SK-N-SH (cell line): ENCODE measurements at regions of chr10 and their contacts with region 1.

Region 1: GRCh38 chr10:94439275-94439861 is 37.0 kb downstream of the TBC1D12 start:
- DNase-seq: no peak
- H3K4me3 ChIP-seq: no peak overlapping the region
- H3K27ac ChIP-seq: no peak overlapping the region
- H3K4me1 ChIP-seq: peaks cover 3 to 10% of the 10 kb centered on the region in 2 experiments; a peak in 2 of 4 replicates
- H3K27me3 ChIP-seq: no peaks in the 10 kb centered on the region
- CTCF ChIP-seq: peak; percentile 25; the same call in 1 of the 2 replicates
- EP300 ChIP-seq: no peak
- RAD21 ChIP-seq: peak; percentile 46

Region 2: GRCh38 chr10:93916257-93917063 is 522.9 kb before region 1 on chr10:
- CTCF ChIA-PET with region 1: interaction called, 50 read pairs
- POLR2A ChIA-PET with region 1: no interaction called
- DNase-seq: peak; percentile 34
- H3K4me3 ChIP-seq: no peak overlapping the region
- H3K27ac ChIP-seq: no peak overlapping the region
- H3K4me1 ChIP-seq: peaks cover 0 to 3% of the 10 kb centered on the region in 2 experiments; a peak in 1 of 4 replicates
- H3K27me3 ChIP-seq: no peaks in the 10 kb centered on the region
- CTCF ChIP-seq: peak; percentile 81
- EP300 ChIP-seq: no peak
- RAD21 ChIP-seq: peak; percentile 80

Region 3: GRCh38 chr10:94334857-94335256 is 104.5 kb before region 1 on chr10:
- CTCF ChIA-PET with region 1: interaction called, 16 read pairs
- POLR2A ChIA-PET with region 1: no interaction called
- DNase-seq: no peak
- H3K4me3 ChIP-seq: no peak overlapping the region
- H3K27ac ChIP-seq: no peak overlapping the region
- H3K4me1 ChIP-seq: no peaks in the 10 kb centered on the region
- H3K27me3 ChIP-seq: no peaks in the 10 kb centered on the region
- CTCF ChIP-seq: no peak
- EP300 ChIP-seq: no peak
- RAD21 ChIP-seq: no peak

Region 4: DNA sequence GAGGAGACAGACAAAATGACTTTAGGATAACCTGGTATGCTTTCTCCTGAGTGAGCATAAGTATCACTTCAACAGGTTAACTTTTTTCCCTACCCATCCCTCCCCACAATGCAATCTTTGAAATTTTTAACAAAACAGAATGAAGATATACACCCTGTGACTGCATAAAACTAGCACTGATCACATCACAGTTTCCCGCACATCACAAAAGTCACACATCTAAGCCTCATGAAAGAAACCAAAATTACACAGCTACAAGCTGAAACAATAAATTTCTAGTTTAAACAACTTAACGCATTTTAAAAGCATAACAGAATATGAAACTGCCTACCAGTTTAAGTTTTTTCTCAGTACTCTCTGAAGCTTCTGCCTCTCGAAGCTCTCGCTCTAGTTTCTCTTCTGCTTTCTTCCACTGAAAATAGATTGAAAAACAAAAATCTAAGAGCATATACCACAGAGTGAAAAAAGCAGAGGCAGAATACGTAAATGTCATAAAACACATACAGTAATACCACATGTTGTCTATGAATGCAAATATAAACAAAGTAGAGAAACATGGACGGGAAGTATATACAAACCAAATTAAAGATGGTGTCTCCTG is 94.7 kb before region 1 on chr10:
- CTCF ChIA-PET with region 1: interaction called, 12 read pairs
- POLR2A ChIA-PET with region 1: no interaction called
- DNase-seq: no peak
- H3K4me3 ChIP-seq: no peak overlapping the region
- H3K27ac ChIP-seq: no peak overlapping the region
- H3K4me1 ChIP-seq: no peaks in the 10 kb centered on the region; a peak in 1 of 4 replicates
- H3K27me3 ChIP-seq: no peaks in the 10 kb centered on the region
- CTCF ChIP-seq: no peak
- EP300 ChIP-seq: no peak
- RAD21 ChIP-seq: no peak

Region 5: GRCh38 chr10:94362360-94363250 is 76.8 kb before region 1 on chr10 and contains the start of gene NOC3L:
- CTCF ChIA-PET with region 1: interaction called, 18 read pairs
- POLR2A ChIA-PET with region 1: no interaction called
- DNase-seq: peak; percentile 93
- H3K4me3 ChIP-seq: peak within 1 kb of the TSS; percentile 79 to 87
- H3K27ac ChIP-seq: peak within 1 kb of the TSS; percentile 76 to 81
- H3K4me1 ChIP-seq: peaks cover 7 to 10% of the 10 kb centered on the region in 2 experiments; a peak in 3 of 4 replicates
- H3K27me3 ChIP-seq: no peaks in the 10 kb centered on the region
- CTCF ChIP-seq: peak; percentile 85
- EP300 ChIP-seq: peak in 1 of 2 experiments; percentile 34; a peak in 1 of 4 replicates
- RAD21 ChIP-seq: peak; percentile 38
- polyA plus RNA-seq, gene NOC3L: 9.0 and 15.4 TPM in 2 replicates

Region 6: GRCh38 chr10:94402015-94402842 is 37.1 kb before region 1 on chr10 and contains the start of gene TBC1D12:
- CTCF ChIA-PET with region 1: interaction called, 23 read pairs
- POLR2A ChIA-PET with region 1: no interaction called
- DNase-seq: peak; percentile 95
- H3K4me3 ChIP-seq: peak within 1 kb of the TSS; percentile 67 to 75
- H3K27ac ChIP-seq: peak within 1 kb of the TSS; percentile 80 to 89
- H3K4me1 ChIP-seq: no peaks in the 10 kb centered on the region; a peak in 1 of 4 replicates
- H3K27me3 ChIP-seq: no peaks in the 10 kb centered on the region
- CTCF ChIP-seq: no peak
- EP300 ChIP-seq: peak; percentile 10 to 27; a peak in 1 of 4 replicates
- RAD21 ChIP-seq: no peak
- polyA plus RNA-seq, gene TBC1D12: 1.8 and 2.5 TPM in 2 replicates

Region 7: GRCh38 chr10:94412449-94412848 is 26.9 kb before region 1 on chr10:
- CTCF ChIA-PET with region 1: interaction called, 21 read pairs
- POLR2A ChIA-PET with region 1: no interaction called
- DNase-seq: no peak
- H3K4me3 ChIP-seq: no peak overlapping the region
- H3K27ac ChIP-seq: peak overlapping the region in 1 of 2 experiments; percentile 61; a peak in 1 of 4 replicates
- H3K4me1 ChIP-seq: peaks cover 0 to 9% of the 10 kb centered on the region in 2 experiments; a peak in 1 of 4 replicates
- H3K27me3 ChIP-seq: no peaks in the 10 kb centered on the region
- CTCF ChIP-seq: no peak
- EP300 ChIP-seq: no peak
- RAD21 ChIP-seq: no peak

Region 8: DNA sequence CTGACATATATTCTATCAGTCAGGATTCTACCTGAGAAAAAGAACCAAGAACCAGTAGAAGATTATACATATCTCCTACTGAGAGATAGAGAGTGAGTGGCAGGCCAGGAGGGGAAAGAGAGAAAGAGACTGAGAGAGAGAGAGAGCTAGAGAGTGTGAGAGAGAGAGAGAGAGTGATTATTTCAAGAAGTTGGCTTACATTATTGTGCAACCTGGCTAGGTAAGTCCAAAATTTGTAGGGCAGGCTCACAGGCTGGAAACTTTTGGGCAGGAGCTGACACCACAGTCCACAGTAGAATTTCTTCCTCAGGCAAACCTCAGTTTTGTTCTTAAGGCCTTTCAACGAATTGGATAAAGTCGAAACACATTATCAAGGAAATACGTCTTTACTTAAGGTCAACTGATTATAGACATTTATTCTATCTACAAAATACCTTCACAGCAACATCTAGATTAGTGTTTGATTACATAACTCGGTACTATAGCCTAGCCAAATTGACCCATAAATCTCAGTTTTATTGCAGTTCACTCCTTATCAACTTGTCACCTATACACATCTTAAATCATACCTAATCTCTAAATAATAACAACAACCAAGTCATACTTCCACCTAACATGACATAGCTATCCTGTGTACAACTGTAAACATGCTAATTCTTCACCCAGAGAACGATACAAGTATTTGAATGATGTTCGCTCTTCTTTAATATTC is 227.2 kb after region 1 on chr10:
- CTCF ChIA-PET with region 1: no interaction called
- POLR2A ChIA-PET with region 1: no interaction called
- DNase-seq: no peak
- H3K4me3 ChIP-seq: no peak overlapping the region
- H3K27ac ChIP-seq: no peak overlapping the region
- H3K4me1 ChIP-seq: no peaks in the 10 kb centered on the region
- H3K27me3 ChIP-seq: no peaks in the 10 kb centered on the region
- CTCF ChIP-seq: no peak
- EP300 ChIP-seq: no peak
- RAD21 ChIP-seq: no peak

Region 9: GRCh38 chr10:94725871-94726270 is 286.5 kb after region 1 on chr10:
- CTCF ChIA-PET with region 1: no interaction called
- POLR2A ChIA-PET with region 1: no interaction called
- DNase-seq: no peak
- H3K4me3 ChIP-seq: no peak overlapping the region
- H3K27ac ChIP-seq: no peak overlapping the region
- H3K4me1 ChIP-seq: no peaks in the 10 kb centered on the region
- H3K27me3 ChIP-seq: no peaks in the 10 kb centered on the region
- CTCF ChIP-seq: no peak
- EP300 ChIP-seq: no peak
- RAD21 ChIP-seq: no peak